Mammary epithelial cell (primary cell): ENCODE measurements at regions of chr16 and their contacts with region 1.

Region 1: GRCh38 chr16:67415872-67416793 is at the start of gene ZDHHC1:
- DNase-seq: peak; percentile 53
- H3K4me3 ChIP-seq: peak within 1 kb of the TSS; percentile 54 to 74 (median 62)
- H3K27ac ChIP-seq: peak within 1 kb of the TSS; percentile 59
- H3K4me1 ChIP-seq: peaks cover 7% of the 10 kb centered on the region
- H3K27me3 ChIP-seq: no peaks in the 10 kb centered on the region
- CTCF ChIP-seq: peak; percentile 47 to 66
- total RNA-seq, gene ZDHHC1: 5.3 to 6.3 TPM

Region 2: DNA sequence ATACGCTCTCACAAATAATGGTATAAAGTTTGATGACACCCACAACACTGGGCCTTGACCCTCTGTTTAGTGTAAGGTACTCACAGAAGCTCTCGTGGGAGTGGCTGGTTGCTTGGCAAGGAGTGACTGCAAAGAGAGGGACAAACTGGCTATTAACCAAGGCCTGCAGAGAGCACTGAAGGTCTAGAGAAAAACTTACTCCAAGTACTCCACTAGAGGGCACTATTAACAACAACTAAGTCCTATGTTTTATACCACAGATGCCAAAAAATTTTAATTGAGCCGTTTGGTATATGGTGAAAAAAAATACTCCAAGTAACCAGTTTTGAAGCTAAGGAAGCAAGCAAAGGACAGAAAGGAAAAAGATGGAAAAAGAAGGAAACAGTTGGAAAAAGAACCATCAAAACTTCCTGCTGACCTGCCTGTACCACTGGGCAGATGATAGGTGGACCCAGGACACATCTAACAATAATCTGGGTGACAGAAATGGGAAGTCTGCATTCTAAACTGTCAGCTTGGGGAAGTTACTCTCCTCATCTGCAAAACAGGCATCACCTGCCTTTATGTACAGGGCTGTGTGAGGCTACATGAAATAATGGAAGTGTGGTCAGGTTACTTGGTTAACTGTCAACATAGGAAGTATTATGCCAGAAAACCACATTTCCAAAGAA is 687.9 kb before region 1 on chr16:
- CTCF ChIA-PET with region 1: no interaction called
- dilution Hi-C with region 1: no loop called
- in situ Hi-C with region 1: no loop called
- intact Hi-C with region 1: no loop called
- DNase-seq: peak; percentile 26
- H3K4me3 ChIP-seq: no peak overlapping the region
- H3K27ac ChIP-seq: no peak overlapping the region
- H3K4me1 ChIP-seq: no peaks in the 10 kb centered on the region
- H3K27me3 ChIP-seq: no peaks in the 10 kb centered on the region
- CTCF ChIP-seq: peak; percentile 47 to 58

Region 3: DNA sequence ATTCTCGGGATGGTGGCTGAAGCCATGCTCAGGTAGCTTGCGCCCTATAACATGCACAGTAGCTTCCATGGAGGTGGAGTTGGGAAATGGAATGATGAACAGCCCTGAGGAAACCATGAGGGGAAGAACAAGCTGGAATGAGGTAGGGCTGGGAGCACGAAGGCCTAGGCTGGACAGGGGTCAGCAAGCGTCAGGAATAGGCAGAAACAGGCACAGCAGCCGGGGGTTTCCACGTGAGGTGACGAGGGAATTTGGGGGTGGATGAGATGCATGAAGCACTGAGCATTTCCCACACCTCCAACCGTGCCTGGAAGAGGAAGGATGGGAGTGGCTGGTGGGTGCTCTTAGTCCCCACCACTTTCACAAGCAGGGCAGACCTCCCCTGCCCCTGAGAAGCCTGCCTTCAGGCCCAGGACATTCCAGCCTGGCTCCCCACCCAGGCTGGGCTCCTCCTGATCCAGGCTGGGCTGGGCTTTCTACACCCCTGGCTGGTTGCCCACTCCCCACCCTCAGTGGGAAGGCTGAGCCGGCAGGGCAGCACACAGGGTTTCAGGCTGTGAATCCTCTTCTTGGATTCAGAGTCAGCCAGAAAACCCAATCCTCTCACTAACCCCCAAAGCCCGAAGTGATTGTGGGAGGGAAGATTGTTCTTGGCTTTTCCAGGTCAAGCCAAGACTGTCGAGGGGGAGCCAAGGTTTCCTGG is 114.9 kb before region 1 on chr16:
- CTCF ChIA-PET with region 1: no interaction called
- dilution Hi-C with region 1: no loop called
- in situ Hi-C with region 1: no loop called
- intact Hi-C with region 1: no loop called
- DNase-seq: no peak
- H3K4me3 ChIP-seq: no peak overlapping the region
- H3K27ac ChIP-seq: no peak overlapping the region
- H3K4me1 ChIP-seq: no peaks in the 10 kb centered on the region
- H3K27me3 ChIP-seq: no peaks in the 10 kb centered on the region
- CTCF ChIP-seq: no peak

Region 4: DNA sequence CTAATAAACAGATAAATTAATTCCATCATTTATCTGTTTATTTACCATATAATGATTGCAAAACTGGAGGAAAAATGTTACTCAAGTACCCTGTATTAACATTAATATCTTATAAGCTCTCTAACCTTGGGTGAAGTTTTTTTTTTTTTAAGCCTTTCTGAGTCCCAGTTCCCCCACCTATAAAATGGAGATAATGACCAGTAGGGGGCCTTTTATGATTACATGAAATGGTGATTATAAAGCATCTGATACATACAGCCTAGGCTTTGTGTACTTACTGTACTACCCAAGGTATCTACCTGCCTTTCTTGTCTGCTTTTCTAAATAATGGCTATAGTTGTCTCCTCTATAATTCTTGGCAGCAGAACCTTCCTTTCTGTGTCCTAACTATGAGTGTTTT is 67.0 kb before region 1 on chr16:
- CTCF ChIA-PET with region 1: no interaction called
- dilution Hi-C with region 1: no loop called
- in situ Hi-C with region 1: no loop called
- intact Hi-C with region 1: loop called (anchors 1 kb)
- DNase-seq: peak; percentile 20
- H3K4me3 ChIP-seq: no peak overlapping the region
- H3K27ac ChIP-seq: no peak overlapping the region
- H3K4me1 ChIP-seq: no peaks in the 10 kb centered on the region
- H3K27me3 ChIP-seq: no peaks in the 10 kb centered on the region
- CTCF ChIP-seq: peak; percentile 52 to 55

Region 5: GRCh38 chr16:67372664-67373063 is 43.5 kb before region 1 on chr16:
- CTCF ChIA-PET with region 1: interaction called, 4 read pairs
- dilution Hi-C with region 1: no loop called
- in situ Hi-C with region 1: no loop called
- intact Hi-C with region 1: loop called (anchors 1 kb)
- DNase-seq: no peak
- H3K4me3 ChIP-seq: no peak overlapping the region
- H3K27ac ChIP-seq: no peak overlapping the region
- H3K4me1 ChIP-seq: no peaks in the 10 kb centered on the region
- H3K27me3 ChIP-seq: peaks cover 1% of the 10 kb centered on the region
- CTCF ChIP-seq: peak; percentile 50 to 53

Region 6: DNA sequence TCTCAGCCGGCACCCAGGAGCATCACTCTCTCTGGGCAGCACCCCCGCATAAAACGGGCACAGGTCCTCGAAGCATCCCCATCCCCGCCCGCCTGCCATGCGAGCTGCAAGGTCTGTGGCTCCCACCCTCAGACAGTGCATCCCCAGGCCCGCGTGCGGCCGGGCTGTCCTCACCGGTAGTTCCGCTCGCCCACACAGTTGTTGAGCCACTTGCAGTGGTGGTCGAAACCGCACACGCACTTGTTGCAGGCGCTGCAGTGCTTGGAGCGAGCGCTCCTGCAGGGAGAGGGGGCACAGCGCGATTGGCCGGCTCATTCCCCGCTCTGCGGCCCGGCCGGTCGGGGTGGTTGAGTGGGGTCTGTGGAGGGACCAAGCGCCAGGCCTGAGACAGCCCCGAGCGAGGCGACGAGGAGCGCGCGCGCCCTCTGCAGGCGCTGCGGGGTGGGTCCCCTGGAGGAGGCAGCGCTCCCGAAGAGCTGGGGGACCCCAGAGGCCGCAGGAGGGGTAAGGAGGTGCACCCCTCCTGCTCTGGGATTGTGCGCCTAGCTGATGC is 16.9 kb before region 1 on chr16:
- CTCF ChIA-PET with region 1: interaction called, 3 read pairs
- dilution Hi-C with region 1: no loop called
- in situ Hi-C with region 1: no loop called
- intact Hi-C with region 1: loop called (anchors 2 kb)
- DNase-seq: no peak
- H3K4me3 ChIP-seq: no peak overlapping the region
- H3K27ac ChIP-seq: no peak overlapping the region
- H3K4me1 ChIP-seq: peaks cover 45% of the 10 kb centered on the region
- H3K27me3 ChIP-seq: no peaks in the 10 kb centered on the region
- CTCF ChIP-seq: peak in 1 of 2 donors; percentile 50